ENCODE measurements at regions of chr18 and their contacts with region 1.

Region 1: GRCh38 chr18:12820506-12820905 is 63.5 kb downstream of the PTPN2 start:
- DNase-seq: no peak
- H3K4me3 Mint-ChIP-seq: no peak overlapping the region
- H3K27ac Mint-ChIP-seq: peak overlapping the region; percentile 9
- H3K4me1 Mint-ChIP-seq: no peaks in the 10 kb centered on the region
- H3K27me3 Mint-ChIP-seq: no peaks in the 10 kb centered on the region
- CTCF ChIP-seq: no peak

Region 2: DNA sequence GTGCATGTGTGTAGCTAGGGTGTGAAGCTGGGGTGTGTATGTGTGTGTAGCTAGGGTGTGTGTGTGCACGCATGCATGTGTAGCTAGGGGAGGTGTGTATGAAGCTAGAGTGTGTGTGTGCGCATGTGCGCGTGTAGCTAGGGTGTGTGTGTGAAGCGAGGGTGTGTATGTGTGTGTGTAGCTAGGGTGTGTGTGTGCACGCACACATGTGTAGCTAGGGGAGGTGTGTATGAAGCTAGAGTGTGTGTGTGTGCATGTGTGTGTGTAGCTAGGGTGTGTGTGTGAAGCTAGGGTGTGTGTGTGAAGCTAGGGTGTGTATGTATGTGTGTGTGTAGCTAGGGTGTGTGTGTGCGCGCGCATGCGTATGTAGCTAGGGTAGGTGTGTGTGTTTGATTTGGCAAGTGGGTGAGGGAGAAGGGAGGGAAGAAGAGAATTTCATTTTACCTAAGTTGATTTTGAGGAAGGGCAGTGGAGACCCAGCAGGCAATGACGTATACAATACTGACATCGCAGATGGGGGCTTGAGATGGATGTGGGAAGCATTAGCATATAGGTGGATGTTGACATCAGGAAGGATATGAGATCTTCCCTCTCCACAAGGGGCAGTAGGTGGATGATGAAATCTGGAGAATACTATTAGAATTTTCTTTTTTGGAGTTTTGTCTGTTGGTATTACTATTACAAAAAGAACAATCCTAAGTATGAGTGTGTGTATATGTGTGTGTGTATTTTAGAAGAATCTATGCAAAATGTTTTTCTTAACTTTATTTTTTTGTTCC is 342.0 kb before region 1 on chr18:
- CTCF ChIA-PET with region 1: no interaction called
- POLR2A ChIA-PET with region 1: no interaction called
- intact Hi-C with region 1: no loop called
- DNase-seq: no peak
- H3K4me3 Mint-ChIP-seq: no peak overlapping the region
- H3K27ac Mint-ChIP-seq: no peak overlapping the region
- H3K4me1 Mint-ChIP-seq: no peaks in the 10 kb centered on the region
- H3K27me3 Mint-ChIP-seq: no peaks in the 10 kb centered on the region
- CTCF ChIP-seq: no peak

Region 3: GRCh38 chr18:12768625-12769024 is 51.9 kb before region 1 on chr18:
- CTCF ChIA-PET with region 1: no interaction called
- POLR2A ChIA-PET with region 1: no interaction called
- intact Hi-C with region 1: loop called (anchors 10 kb)
- DNase-seq: peak; percentile 11
- H3K4me3 Mint-ChIP-seq: no peak overlapping the region
- H3K27ac Mint-ChIP-seq: no peak overlapping the region
- H3K4me1 Mint-ChIP-seq: peaks cover 6% of the 10 kb centered on the region
- H3K27me3 Mint-ChIP-seq: no peaks in the 10 kb centered on the region
- CTCF ChIP-seq: no peak

Measured in MCF 10A (cell line).